ENCODE measurements at regions of chr12 and their contacts with region 1.

Region 1: DNA sequence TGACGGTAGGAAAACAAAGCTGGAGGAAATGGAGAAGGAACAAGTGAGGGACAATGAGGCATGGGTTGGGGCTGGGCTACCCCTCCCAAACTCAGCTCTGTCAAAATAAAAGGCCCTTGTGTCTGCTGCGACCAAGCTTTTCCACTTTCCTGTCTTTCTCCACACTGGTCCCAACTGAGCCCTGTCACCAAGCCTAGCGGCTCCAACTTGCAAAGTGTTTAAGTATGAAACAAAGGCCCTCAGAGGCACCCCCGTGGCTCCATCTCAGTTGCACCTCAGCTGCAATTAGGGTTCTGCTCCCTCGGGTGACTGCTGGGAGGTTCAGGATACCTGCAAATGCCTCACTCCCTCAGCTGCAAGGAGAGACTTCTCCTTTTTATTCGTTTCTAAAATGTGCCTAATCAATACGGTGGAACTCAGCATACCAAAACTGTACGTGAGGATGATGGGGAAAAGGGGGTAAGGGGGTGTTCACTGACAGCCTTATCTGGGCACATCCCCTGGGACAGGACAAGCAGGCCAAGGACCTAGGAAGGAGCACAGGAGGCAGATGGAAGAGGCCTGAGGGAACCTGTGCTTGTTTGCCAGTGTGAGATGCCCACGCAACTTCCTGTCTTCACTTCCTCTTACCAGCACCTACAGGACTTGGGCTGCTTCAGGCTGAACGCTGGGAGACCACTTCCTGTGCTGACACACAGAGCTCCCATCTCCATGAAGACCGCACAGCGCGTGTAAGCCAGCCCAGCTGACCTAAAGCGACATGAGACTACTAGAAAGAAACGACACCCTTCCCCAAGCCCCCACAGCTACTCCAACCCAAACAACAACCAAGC is 8.9 kb downstream of the VAMP1 start:
- DNase-seq: peak; percentile 95
- ATAC-seq: peak; percentile 79
- H3K4me3 Mint-ChIP-seq: peak overlapping the region; percentile 71
- H3K27ac Mint-ChIP-seq: peak overlapping the region; percentile 99
- H3K4me1 Mint-ChIP-seq: peaks cover 92% of the 10 kb centered on the region
- H3K27me3 Mint-ChIP-seq: no peaks in the 10 kb centered on the region

Region 2: GRCh38 chr12:6335451-6336078 is 126.1 kb before region 1 on chr12:
- CTCF ChIA-PET with region 1: interaction called, 84 read pairs
- POLR2A ChIA-PET with region 1: interaction called, 19 read pairs
- DNase-seq: peak; percentile 93
- ATAC-seq: peak; percentile 67
- H3K4me3 Mint-ChIP-seq: no peak overlapping the region
- H3K27ac Mint-ChIP-seq: no peak overlapping the region
- H3K4me1 Mint-ChIP-seq: peaks cover 9% of the 10 kb centered on the region
- H3K27me3 Mint-ChIP-seq: no peaks in the 10 kb centered on the region

Region 3: DNA sequence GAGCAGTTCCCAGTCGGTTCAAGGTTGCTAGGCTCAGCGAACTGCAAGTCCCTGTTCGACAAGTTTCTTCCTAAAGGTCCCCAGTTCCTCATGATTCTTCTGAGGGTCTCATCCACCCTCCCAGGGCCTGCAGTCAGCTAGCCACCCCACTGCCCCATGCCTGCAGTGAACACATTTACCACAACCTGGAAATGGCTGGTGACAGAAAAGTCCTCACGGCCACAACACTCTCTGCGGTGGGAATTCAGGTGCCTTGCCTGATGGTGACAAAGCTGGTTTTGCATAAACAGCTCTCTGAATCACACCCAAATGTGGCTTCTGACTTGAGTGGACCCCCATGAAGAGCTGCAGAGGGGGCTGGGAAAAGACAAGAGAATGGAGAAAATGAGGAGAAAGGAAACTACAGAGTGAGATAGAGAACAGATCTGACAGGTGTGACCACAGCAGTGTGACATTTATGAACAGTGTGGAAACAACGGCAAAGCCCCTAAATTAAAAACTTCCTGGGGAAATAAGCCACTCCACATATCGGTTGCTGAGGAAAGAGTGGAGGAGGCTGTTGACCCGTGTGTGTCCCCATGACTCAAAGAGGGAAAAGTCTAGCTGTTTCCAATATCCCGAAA is 18.1 kb before region 1 on chr12:
- CTCF ChIA-PET with region 1: interaction called, 64 read pairs
- POLR2A ChIA-PET with region 1: interaction called, 91 read pairs
- DNase-seq: peak; percentile 49
- ATAC-seq: peak; percentile 29
- H3K4me3 Mint-ChIP-seq: peak overlapping the region; percentile 90
- H3K27ac Mint-ChIP-seq: peak overlapping the region; percentile 96
- H3K4me1 Mint-ChIP-seq: peaks cover 68% of the 10 kb centered on the region
- H3K27me3 Mint-ChIP-seq: no peaks in the 10 kb centered on the region

Region 4: GRCh38 chr12:6493497-6494257 is 32.1 kb after region 1 on chr12 and contains the start of gene NCAPD2:
- CTCF ChIA-PET with region 1: interaction called, 10 read pairs
- POLR2A ChIA-PET with region 1: interaction called, 20 read pairs
- DNase-seq: peak; percentile 98
- ATAC-seq: peak; percentile 89
- H3K4me3 Mint-ChIP-seq: peak within 1 kb of the TSS; percentile 93
- H3K27ac Mint-ChIP-seq: peak within 1 kb of the TSS; percentile 99
- H3K4me1 Mint-ChIP-seq: peaks cover 33% of the 10 kb centered on the region
- H3K27me3 Mint-ChIP-seq: no peaks in the 10 kb centered on the region
- total RNA-seq, gene NCAPD2: 195 to 201 TPM

Region 5: GRCh38 chr12:6540181-6540877 is 78.7 kb after region 1 on chr12:
- CTCF ChIA-PET with region 1: interaction called, 14 read pairs
- POLR2A ChIA-PET with region 1: interaction called, 23 read pairs
- DNase-seq: peak; percentile 69
- ATAC-seq: peak; percentile 38
- H3K4me3 Mint-ChIP-seq: peak overlapping the region; percentile 48
- H3K27ac Mint-ChIP-seq: peak overlapping the region; percentile 82
- H3K4me1 Mint-ChIP-seq: peaks cover 65% of the 10 kb centered on the region
- H3K27me3 Mint-ChIP-seq: no peaks in the 10 kb centered on the region